Panc1 (cell line): ENCODE measurements at regions of chr1 and their contacts with region 1.

Region 1: GRCh38 chr1:44696789-44697345 is 22.4 kb downstream of the ARMH1 start:
- DNase-seq: no peak
- ATAC-seq: no peak
- H3K4me3 ChIP-seq: no peak overlapping the region
- H3K27ac ChIP-seq: no peak overlapping the region
- H3K4me1 ChIP-seq: no peaks in the 10 kb centered on the region
- H3K27me3 ChIP-seq: no peaks in the 10 kb centered on the region
- CTCF ChIP-seq: no peak

Region 2: DNA sequence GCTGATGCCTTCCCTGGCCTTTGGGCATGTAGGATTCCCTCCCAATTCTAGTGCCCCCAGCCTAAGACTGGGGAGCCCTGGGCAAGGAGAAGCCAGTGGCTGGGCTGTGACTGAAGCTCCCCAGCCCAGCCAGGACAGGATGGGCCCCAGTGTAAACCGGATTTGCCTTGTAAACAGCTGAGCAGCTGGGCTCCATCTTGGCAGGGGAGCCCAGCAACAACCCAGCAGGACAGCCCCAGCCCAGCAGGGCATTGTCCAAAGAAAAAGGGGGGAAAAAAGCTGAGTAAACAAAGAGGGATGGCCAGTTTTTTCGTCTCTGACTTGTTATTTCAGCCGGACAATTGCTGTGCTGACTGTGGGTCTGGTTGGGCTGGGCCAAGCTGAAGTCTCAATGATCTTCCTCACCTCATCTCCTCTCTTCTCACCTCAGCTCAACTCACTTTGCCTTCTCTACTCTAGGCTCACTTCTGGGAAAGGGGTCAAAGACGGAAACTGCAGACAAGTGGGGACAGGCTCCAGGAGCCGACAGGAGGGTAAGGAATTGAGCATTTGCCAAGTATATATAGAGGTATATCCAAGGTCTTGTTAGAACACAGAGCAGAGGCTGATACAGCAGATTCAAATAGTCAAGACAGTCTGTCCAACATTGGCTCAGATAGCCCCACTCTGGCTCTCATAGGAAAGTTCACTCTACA is 120.3 kb before region 1 on chr1:
- CTCF ChIA-PET with region 1: no interaction called
- POLR2A ChIA-PET with region 1: no interaction called
- in situ Hi-C with region 1: no loop called
- intact Hi-C with region 1: no loop called
- DNase-seq: no peak
- ATAC-seq: no peak
- H3K4me3 ChIP-seq: no peak overlapping the region
- H3K27ac ChIP-seq: no peak overlapping the region
- H3K4me1 ChIP-seq: no peaks in the 10 kb centered on the region
- H3K27me3 ChIP-seq: no peaks in the 10 kb centered on the region
- CTCF ChIP-seq: no peak

Region 3: DNA sequence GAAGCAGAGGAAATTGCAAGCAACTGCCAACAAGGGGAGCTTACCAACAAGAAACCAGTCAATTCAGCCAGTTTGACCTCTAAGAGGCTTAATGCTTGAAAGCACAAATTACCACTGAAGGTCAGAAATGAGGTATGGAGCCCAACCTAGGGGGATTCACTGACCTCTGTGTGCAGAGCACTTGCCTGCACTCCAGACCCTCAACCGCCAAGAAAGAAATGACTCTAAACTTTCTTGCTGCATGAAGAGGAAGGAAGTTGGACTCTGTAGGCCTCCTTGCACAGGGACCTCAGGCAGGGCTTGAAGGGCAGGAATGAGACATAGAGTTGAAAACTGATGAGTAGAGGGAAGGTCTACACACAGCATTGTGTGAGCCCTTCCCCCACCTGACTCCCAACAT is 12.3 kb before region 1 on chr1:
- CTCF ChIA-PET with region 1: interaction called, 4 read pairs
- POLR2A ChIA-PET with region 1: interaction called, 10 read pairs
- in situ Hi-C with region 1: no loop called
- intact Hi-C with region 1: no loop called
- DNase-seq: no peak
- ATAC-seq: no peak
- H3K4me3 ChIP-seq: no peak overlapping the region
- H3K27ac ChIP-seq: no peak overlapping the region
- H3K4me1 ChIP-seq: peaks cover 4% of the 10 kb centered on the region; the same call in 1 of the 2 replicates
- H3K27me3 ChIP-seq: no peaks in the 10 kb centered on the region
- CTCF ChIP-seq: no peak

Region 4: DNA sequence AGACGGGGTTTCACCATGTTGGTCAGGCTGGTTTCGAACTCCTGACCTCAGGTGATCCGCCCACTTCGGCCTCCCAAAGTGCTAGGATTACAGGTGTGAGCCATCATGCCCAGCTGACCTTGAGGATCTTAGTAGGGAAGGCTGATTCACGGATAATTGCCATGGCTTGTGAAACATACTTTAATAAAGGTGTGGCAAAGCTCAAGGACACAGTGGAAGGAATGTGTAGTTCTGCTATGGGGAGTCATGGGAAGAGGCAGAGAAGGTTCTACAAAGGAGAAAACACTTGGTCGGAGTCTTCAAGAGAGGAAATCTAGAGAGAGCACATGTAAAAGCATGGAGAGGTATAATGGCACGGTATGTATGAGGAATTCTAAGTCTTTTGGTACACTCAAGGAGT is 158.9 kb after region 1 on chr1:
- CTCF ChIA-PET with region 1: no interaction called
- POLR2A ChIA-PET with region 1: no interaction called
- in situ Hi-C with region 1: no loop called
- intact Hi-C with region 1: no loop called
- DNase-seq: no peak
- ATAC-seq: no peak
- H3K4me3 ChIP-seq: no peak overlapping the region
- H3K27ac ChIP-seq: no peak overlapping the region
- H3K4me1 ChIP-seq: no peaks in the 10 kb centered on the region
- H3K27me3 ChIP-seq: no peaks in the 10 kb centered on the region
- CTCF ChIP-seq: no peak